ENCODE measurements at regions of chr14 and their contacts with region 1.

Region 1: GRCh38 chr14:59483900-59484638 is at the starts of genes JKAMP and L3HYPDH:
- DNase-seq: peak; percentile 93 to 98 (median 97)
- ATAC-seq: peak; percentile 97
- H3K4me3 ChIP-seq: peak within 1 kb of the TSS; percentile 81
- H3K4me3 Mint-ChIP-seq: peak within 1 kb of the TSS; percentile 89 to 98 (median 96)
- H3K27ac ChIP-seq: peak within 1 kb of the TSS; percentile 84
- H3K27ac Mint-ChIP-seq: peak within 1 kb of the TSS; percentile 85 to 96 (median 94)
- H3K4me1 ChIP-seq: peaks cover 18 to 20% of the 10 kb centered on the region in 2 donors
- H3K4me1 Mint-ChIP-seq: peaks cover 44 to 82% (median 76%) of the 10 kb centered on the region in 7 donors
- H3K27me3 ChIP-seq: no peaks in the 10 kb centered on the region
- H3K27me3 Mint-ChIP-seq: no peaks in the 10 kb centered on the region
- total RNA-seq, gene JKAMP: 12.2 to 33.7 (median 32.5) TPM
- total RNA-seq, gene L3HYPDH: 18.9 to 55.9 (median 24.2) TPM

Region 2: GRCh38 chr14:58331111-58331510 is 1153.0 kb before region 1 on chr14:
- CTCF ChIA-PET with region 1: no interaction called
- POLR2A ChIA-PET with region 1: no interaction called
- intact Hi-C with region 1: loop called in 1 of 2 experiments (anchors 1 kb)
- DNase-seq: peak; percentile 61 to 98 (median 95)
- ATAC-seq: peak; percentile 97
- H3K4me3 ChIP-seq: peak overlapping the region; percentile 17
- H3K4me3 Mint-ChIP-seq: peak overlapping the region; percentile 38 to 85 (median 76)
- H3K27ac ChIP-seq: peak overlapping the region; percentile 72
- H3K27ac Mint-ChIP-seq: peak overlapping the region; percentile 84 to 97 (median 94)
- H3K4me1 ChIP-seq: peaks cover 5 to 9% of the 10 kb centered on the region in 2 donors
- H3K4me1 Mint-ChIP-seq: peaks cover 17 to 42% (median 32%) of the 10 kb centered on the region in 7 donors
- H3K27me3 ChIP-seq: no peaks in the 10 kb centered on the region
- H3K27me3 Mint-ChIP-seq: no peaks in the 10 kb centered on the region

Region 3: GRCh38 chr14:58637391-58638230 is 846.5 kb before region 1 on chr14 and contains the start of gene DACT1:
- CTCF ChIA-PET with region 1: no interaction called
- POLR2A ChIA-PET with region 1: no interaction called
- intact Hi-C with region 1: loop called (anchors 2 to 10 kb)
- DNase-seq: peak; percentile 45 to 74 (median 64)
- ATAC-seq: peak; percentile 80
- H3K4me3 ChIP-seq: peak within 1 kb of the TSS; percentile 80
- H3K4me3 Mint-ChIP-seq: peak within 1 kb of the TSS; percentile 89 to 99 (median 98)
- H3K27ac ChIP-seq: peak within 1 kb of the TSS; percentile 61
- H3K27ac Mint-ChIP-seq: peak within 1 kb of the TSS; percentile 84 to 95 (median 91)
- H3K4me1 ChIP-seq: peaks cover 0 to 22% of the 10 kb centered on the region in 2 donors
- H3K4me1 Mint-ChIP-seq: peaks cover 20 to 61% (median 45%) of the 10 kb centered on the region in 7 donors
- H3K27me3 ChIP-seq: no peaks in the 10 kb centered on the region
- H3K27me3 Mint-ChIP-seq: peaks cover 0 to 44% (median 6%) of the 10 kb centered on the region in 5 donors
- total RNA-seq, gene DACT1: 8.2 to 32.3 (median 15.0) TPM

Region 4: GRCh38 chr14:59507063-59507780 is 23.2 kb after region 1 on chr14:
- CTCF ChIA-PET with region 1: interaction called, 3 read pairs
- POLR2A ChIA-PET with region 1: no interaction called
- intact Hi-C with region 1: loop called in 1 of 2 experiments (anchors 1 kb)
- DNase-seq: peak in 8 of 9 donors; percentile 9 to 47 (median 34)
- ATAC-seq: peak; percentile 90
- H3K4me3 ChIP-seq: no peak overlapping the region
- H3K4me3 Mint-ChIP-seq: no peak overlapping the region
- H3K27ac ChIP-seq: no peak overlapping the region
- H3K27ac Mint-ChIP-seq: no peak overlapping the region
- H3K4me1 ChIP-seq: peaks cover 0 to 4% of the 10 kb centered on the region in 2 donors
- H3K4me1 Mint-ChIP-seq: peaks cover 3 to 17% (median 15%) of the 10 kb centered on the region in 7 donors
- H3K27me3 ChIP-seq: no peaks in the 10 kb centered on the region
- H3K27me3 Mint-ChIP-seq: peaks cover 8 to 18% (median 13%) of the 10 kb centered on the region in 5 donors

Region 5: GRCh38 chr14:60091550-60092530 is 607.8 kb after region 1 on chr14 and contains the start of gene PCNX4:
- CTCF ChIA-PET with region 1: no interaction called
- POLR2A ChIA-PET with region 1: no interaction called
- intact Hi-C with region 1: loop called (anchors 1 kb)
- DNase-seq: peak; percentile 79 to 95 (median 94)
- ATAC-seq: peak; percentile 95
- H3K4me3 ChIP-seq: peak within 1 kb of the TSS; percentile 94
- H3K4me3 Mint-ChIP-seq: peak within 1 kb of the TSS; percentile 88 to 98 (median 95)
- H3K27ac ChIP-seq: peak within 1 kb of the TSS; percentile 96
- H3K27ac Mint-ChIP-seq: peak within 1 kb of the TSS; percentile 90 to 99 (median 96)
- H3K4me1 ChIP-seq: peaks cover 14 to 16% of the 10 kb centered on the region in 2 donors
- H3K4me1 Mint-ChIP-seq: peaks cover 28 to 48% (median 41%) of the 10 kb centered on the region in 7 donors
- H3K27me3 ChIP-seq: peaks cover 0 to 4% of the 10 kb centered on the region in 2 donors
- H3K27me3 Mint-ChIP-seq: peaks cover 0 to 5% (median 0%) of the 10 kb centered on the region in 5 donors
- total RNA-seq, gene PCNX4: 34.9 to 48.2 (median 43.3) TPM

Region 6: DNA sequence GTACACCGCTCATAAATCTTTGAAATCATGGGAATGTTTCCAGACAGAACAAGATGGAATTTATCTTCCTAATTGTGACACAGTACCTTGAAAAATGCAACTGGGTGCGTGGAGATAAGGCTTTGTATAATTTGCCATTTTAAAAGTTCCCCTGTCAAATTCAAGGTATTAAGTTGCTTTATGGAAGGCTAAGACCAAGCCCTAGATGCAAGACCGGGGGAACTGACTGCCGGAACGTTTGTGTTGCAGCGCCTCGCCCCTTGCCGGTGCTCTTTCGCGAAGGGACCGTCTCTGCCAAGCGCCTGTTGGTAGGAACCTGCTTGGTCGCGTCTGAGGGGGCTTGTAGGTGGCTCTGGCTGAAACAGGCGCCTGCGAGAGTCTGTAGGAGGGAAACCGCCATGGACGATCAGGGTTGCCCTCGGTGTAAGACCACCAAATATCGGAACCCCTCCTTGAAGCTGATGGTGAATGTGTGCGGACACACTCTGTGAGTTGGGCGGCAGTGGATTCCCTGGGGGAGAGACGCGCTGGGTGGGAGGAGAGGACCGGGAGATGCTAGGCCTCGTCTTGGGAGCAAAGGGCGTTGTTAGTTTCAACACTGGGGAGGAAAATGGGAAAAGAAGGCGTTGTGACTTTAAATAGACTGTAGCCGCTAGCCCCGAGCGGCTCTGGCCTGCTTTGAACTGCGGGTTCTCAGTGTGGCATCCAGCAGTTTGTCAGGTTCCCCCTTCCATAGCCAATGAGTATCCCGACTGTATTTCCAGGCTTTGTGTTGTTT is 1250.6 kb after region 1 on chr14 and contains the start of gene MNAT1:
- CTCF ChIA-PET with region 1: no interaction called
- POLR2A ChIA-PET with region 1: no interaction called
- intact Hi-C with region 1: loop called in 1 of 2 experiments (anchors 10 kb)
- DNase-seq: peak; percentile 65 to 81 (median 75)
- ATAC-seq: peak; percentile 95
- H3K4me3 ChIP-seq: peak within 1 kb of the TSS; percentile 64
- H3K4me3 Mint-ChIP-seq: peak within 1 kb of the TSS; percentile 95 to 100 (median 99)
- H3K27ac ChIP-seq: peak within 1 kb of the TSS; percentile 70
- H3K27ac Mint-ChIP-seq: peak within 1 kb of the TSS; percentile 88 to 99 (median 94)
- H3K4me1 ChIP-seq: peaks cover 0 to 10% of the 10 kb centered on the region in 2 donors
- H3K4me1 Mint-ChIP-seq: peaks cover 22 to 37% (median 29%) of the 10 kb centered on the region in 7 donors
- H3K27me3 ChIP-seq: peaks cover 0 to 4% of the 10 kb centered on the region in 2 donors
- H3K27me3 Mint-ChIP-seq: peaks cover 13 to 42% (median 22%) of the 10 kb centered on the region in 5 donors
- total RNA-seq, gene MNAT1: 16.0 to 39.1 (median 20.0) TPM

Measured in naive thymus-derived CD4-positive, alpha-beta T cell (primary cell).